GM12878 (cell line): ENCODE measurements at regions of chr5 and their contacts with region 1.

Region 1: DNA sequence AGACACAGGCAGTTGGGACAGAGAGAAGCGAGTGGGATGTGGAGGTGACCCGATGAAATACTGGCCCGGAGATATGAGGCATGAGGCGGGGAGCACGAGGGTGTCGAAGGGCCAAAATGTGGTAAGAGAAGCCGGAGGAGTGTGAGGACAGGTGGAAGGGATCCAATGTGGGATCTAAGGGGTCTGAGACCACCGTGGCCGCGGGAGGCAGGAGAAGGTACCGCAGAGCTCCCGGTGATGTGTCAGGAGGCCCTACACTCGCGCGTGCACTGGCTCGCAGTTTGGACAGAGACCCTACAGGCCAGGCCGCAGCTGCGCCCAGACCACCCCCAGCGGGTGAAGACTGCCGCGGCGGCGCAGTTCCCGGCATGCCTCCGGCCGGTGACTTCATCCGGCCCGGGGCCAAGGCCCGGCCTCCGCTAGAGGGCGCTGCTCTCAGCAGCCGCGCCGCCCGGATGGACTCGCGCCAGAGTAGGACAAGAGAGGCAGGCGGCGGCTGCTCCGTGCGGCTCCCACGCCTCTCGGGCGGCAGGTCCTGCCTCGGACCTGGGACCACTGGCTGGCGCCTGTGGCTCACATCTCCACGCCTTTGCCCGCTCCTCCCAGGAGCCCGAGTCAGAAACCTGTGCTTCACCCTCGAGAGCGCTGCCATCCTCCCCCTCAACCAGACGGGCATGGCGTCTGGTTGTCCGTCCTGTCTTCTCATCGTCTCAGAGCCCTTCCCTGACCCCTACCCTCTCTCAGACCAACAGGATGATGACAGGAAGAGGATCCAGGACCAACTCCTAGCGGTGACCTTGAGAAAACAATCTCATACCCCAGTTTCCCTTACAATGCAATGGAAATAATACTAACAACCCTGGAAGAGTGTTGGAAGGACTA is 35.4 kb upstream of the STING1 start:
- DNase-seq: no peak
- ATAC-seq: peak; percentile 92
- H3K4me3 ChIP-seq: peak overlapping the region; percentile 66
- H3K27ac ChIP-seq: peak overlapping the region; percentile 69
- H3K4me1 ChIP-seq: peaks cover 19% of the 10 kb centered on the region
- H3K27me3 ChIP-seq: no peaks in the 10 kb centered on the region
- CTCF ChIP-seq: peak; percentile 96 to 99 (median 97); a peak in 5 of 6 replicates
- EP300 ChIP-seq: no peak
- POLR2A ChIP-seq: peak; percentile 96
- RAD21 ChIP-seq: peak; percentile 74

Region 2: GRCh38 chr5:138668376-138669079 is 849.4 kb before region 1 on chr5:
- CTCF ChIA-PET with region 1: no interaction called
- POLR2A ChIA-PET with region 1: no interaction called
- RAD21 ChIA-PET with region 1: no interaction called
- SMC1A ChIA-PET with region 1: no interaction called
- in situ Hi-C with region 1: no loop called
- intact Hi-C with region 1: no loop called
- DNase-seq: no peak
- ATAC-seq: peak; percentile 64
- H3K4me3 ChIP-seq: no peak overlapping the region
- H3K27ac ChIP-seq: no peak overlapping the region
- H3K4me1 ChIP-seq: peaks cover under 1% of the 10 kb centered on the region; the same call in 1 of the 2 replicates
- H3K27me3 ChIP-seq: no peaks in the 10 kb centered on the region
- CTCF ChIP-seq: no peak
- EP300 ChIP-seq: no peak
- POLR2A ChIP-seq: no peak
- RAD21 ChIP-seq: no peak

Region 3: DNA sequence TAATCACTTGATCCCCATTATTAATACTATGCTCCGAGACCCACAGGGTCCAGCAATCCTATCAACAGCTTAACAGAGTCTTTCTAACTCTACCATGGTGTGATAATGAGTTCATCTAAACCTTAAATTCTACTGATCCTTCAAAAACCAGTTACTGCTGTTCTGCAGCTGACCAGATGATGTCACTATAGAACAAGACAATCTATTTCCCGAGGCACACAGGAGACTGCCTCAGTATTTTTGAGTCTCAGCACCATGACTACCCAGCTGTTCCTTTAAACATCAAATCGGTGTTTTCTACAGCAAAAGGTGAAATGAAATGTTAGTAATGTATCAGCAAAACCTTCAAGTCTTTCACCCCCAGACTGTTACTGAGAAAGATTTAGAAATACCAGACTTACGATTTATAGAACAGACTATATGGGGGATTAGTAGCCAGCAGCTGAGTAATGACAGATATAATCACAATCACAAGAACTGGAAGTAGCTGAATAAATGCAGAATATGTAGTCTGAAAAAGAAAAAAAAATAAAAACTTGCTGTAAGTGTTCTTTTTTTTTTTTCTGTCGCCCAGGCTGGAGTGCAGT is 95.5 kb before region 1 on chr5:
- CTCF ChIA-PET with region 1: interaction called, 491 read pairs
- POLR2A ChIA-PET with region 1: interaction called, 12 read pairs
- RAD21 ChIA-PET with region 1: interaction called, 241 read pairs
- SMC1A ChIA-PET with region 1: interaction called, 235 read pairs
- in situ Hi-C with region 1: loop called (anchors 5 kb)
- intact Hi-C with region 1: loop called (anchors 1 kb)
- DNase-seq: no peak
- ATAC-seq: peak; percentile 95
- H3K4me3 ChIP-seq: no peak overlapping the region
- H3K27ac ChIP-seq: no peak overlapping the region
- H3K4me1 ChIP-seq: no peaks in the 10 kb centered on the region
- H3K27me3 ChIP-seq: no peaks in the 10 kb centered on the region
- CTCF ChIP-seq: peak; percentile 85 to 95 (median 94)
- EP300 ChIP-seq: no peak
- POLR2A ChIP-seq: no peak
- RAD21 ChIP-seq: peak; percentile 99

Region 4: GRCh38 chr5:139446956-139447779 is 70.8 kb before region 1 on chr5:
- CTCF ChIA-PET with region 1: interaction called, 9 read pairs
- POLR2A ChIA-PET with region 1: interaction called, 9 read pairs
- RAD21 ChIA-PET with region 1: interaction called, 4 read pairs
- SMC1A ChIA-PET with region 1: interaction called, 11 read pairs
- in situ Hi-C with region 1: no loop called
- intact Hi-C with region 1: no loop called
- DNase-seq: peak; percentile 87
- ATAC-seq: peak; percentile 85
- H3K4me3 ChIP-seq: no peak overlapping the region
- H3K27ac ChIP-seq: peak overlapping the region; percentile 68
- H3K4me1 ChIP-seq: peaks cover 29% of the 10 kb centered on the region
- H3K27me3 ChIP-seq: no peaks in the 10 kb centered on the region
- CTCF ChIP-seq: no peak
- EP300 ChIP-seq: peak; percentile 94 to 97
- POLR2A ChIP-seq: no peak
- RAD21 ChIP-seq: no peak

Region 5: GRCh38 chr5:139482050-139482889 is 35.7 kb before region 1 on chr5 and contains the start of gene STING1:
- CTCF ChIA-PET with region 1: interaction called, 32 read pairs
- POLR2A ChIA-PET with region 1: interaction called, 5 read pairs
- RAD21 ChIA-PET with region 1: interaction called, 32 read pairs
- SMC1A ChIA-PET with region 1: interaction called, 15 read pairs
- in situ Hi-C with region 1: no loop called
- intact Hi-C with region 1: no loop called
- DNase-seq: peak; percentile 41
- ATAC-seq: peak; percentile 75
- H3K4me3 ChIP-seq: peak within 1 kb of the TSS; percentile 59
- H3K27ac ChIP-seq: peak within 1 kb of the TSS; percentile 91
- H3K4me1 ChIP-seq: peaks cover 27% of the 10 kb centered on the region
- H3K27me3 ChIP-seq: no peaks in the 10 kb centered on the region
- CTCF ChIP-seq: no peak
- EP300 ChIP-seq: no peak
- POLR2A ChIP-seq: peak; percentile 29
- RAD21 ChIP-seq: no peak
- polyA plus RNA-seq, gene STING1: 10.1 to 12.1 TPM

Region 6: GRCh38 chr5:139531772-139532169 is 13.8 kb after region 1 on chr5:
- CTCF ChIA-PET with region 1: interaction called, 38 read pairs
- POLR2A ChIA-PET with region 1: interaction called, 13 read pairs
- RAD21 ChIA-PET with region 1: interaction called, 6 read pairs
- SMC1A ChIA-PET with region 1: interaction called, 7 read pairs
- in situ Hi-C with region 1: no loop called
- intact Hi-C with region 1: no loop called
- DNase-seq: no peak
- ATAC-seq: peak; percentile 55
- H3K4me3 ChIP-seq: no peak overlapping the region; the same call in 1 of the 2 replicates
- H3K27ac ChIP-seq: no peak overlapping the region
- H3K4me1 ChIP-seq: peaks cover 3% of the 10 kb centered on the region; the same call in 1 of the 2 replicates
- H3K27me3 ChIP-seq: no peaks in the 10 kb centered on the region
- CTCF ChIP-seq: no peak
- EP300 ChIP-seq: no peak
- POLR2A ChIP-seq: no peak
- RAD21 ChIP-seq: no peak